ENCODE measurements at regions of chr1 and their contacts with region 1.

Region 1: GRCh38 chr1:35192853-35193664 is at the start of gene SFPQ:
- DNase-seq: peak; percentile 92 to 98
- ATAC-seq: peak; percentile 95 to 99 (median 98)
- H3K4me3 ChIP-seq: peak within 1 kb of the TSS; percentile 82 to 100 (median 98)
- H3K27ac ChIP-seq: peak within 1 kb of the TSS; percentile 96 to 100 (median 99)
- H3K4me1 ChIP-seq: peaks cover 9 to 41% (median 37%) of the 10 kb centered on the region in 9 donors
- H3K27me3 ChIP-seq: no peaks in the 10 kb centered on the region
- CTCF ChIP-seq: no peak
- total RNA-seq, gene SFPQ: 80.0 to 112 (median 95.2) TPM

Region 2: GRCh38 chr1:34859446-34860200 is 333.4 kb before region 1 on chr1 and contains the start of gene SMIM12:
- intact Hi-C with region 1: loop called in 1 of 10 experiments (anchors 10 kb)
- DNase-seq: peak; percentile 94 to 96
- ATAC-seq: peak; percentile 96 to 100 (median 98)
- H3K4me3 ChIP-seq: peak within 1 kb of the TSS; percentile 79 to 96 (median 91)
- H3K27ac ChIP-seq: peak within 1 kb of the TSS; percentile 77 to 96 (median 90)
- H3K4me1 ChIP-seq: peaks cover 8 to 37% (median 26%) of the 10 kb centered on the region in 9 donors
- H3K27me3 ChIP-seq: no peaks in the 10 kb centered on the region
- CTCF ChIP-seq: peak; percentile 80 to 95 (median 91)
- total RNA-seq, gene SMIM12: 33.9 to 74.2 (median 43.7) TPM

Region 3: GRCh38 chr1:35268282-35269200 is 75.5 kb after region 1 on chr1 and contains the start of gene ZMYM4:
- intact Hi-C with region 1: loop called in 2 of 10 experiments (anchors 10 kb)
- DNase-seq: peak; percentile 93 to 96
- ATAC-seq: peak; percentile 98 to 99 (median 98)
- H3K4me3 ChIP-seq: peak within 1 kb of the TSS; percentile 70 to 97 (median 90)
- H3K27ac ChIP-seq: peak within 1 kb of the TSS; percentile 59 to 97 (median 88)
- H3K4me1 ChIP-seq: peaks cover 0 to 45% (median 19%) of the 10 kb centered on the region in 9 donors
- H3K27me3 ChIP-seq: no peaks in the 10 kb centered on the region
- CTCF ChIP-seq: peak in 2 of 9 donors; percentile 16 to 25
- total RNA-seq, gene ZMYM4: 26.1 to 37.7 (median 35.0) TPM

Region 4: DNA sequence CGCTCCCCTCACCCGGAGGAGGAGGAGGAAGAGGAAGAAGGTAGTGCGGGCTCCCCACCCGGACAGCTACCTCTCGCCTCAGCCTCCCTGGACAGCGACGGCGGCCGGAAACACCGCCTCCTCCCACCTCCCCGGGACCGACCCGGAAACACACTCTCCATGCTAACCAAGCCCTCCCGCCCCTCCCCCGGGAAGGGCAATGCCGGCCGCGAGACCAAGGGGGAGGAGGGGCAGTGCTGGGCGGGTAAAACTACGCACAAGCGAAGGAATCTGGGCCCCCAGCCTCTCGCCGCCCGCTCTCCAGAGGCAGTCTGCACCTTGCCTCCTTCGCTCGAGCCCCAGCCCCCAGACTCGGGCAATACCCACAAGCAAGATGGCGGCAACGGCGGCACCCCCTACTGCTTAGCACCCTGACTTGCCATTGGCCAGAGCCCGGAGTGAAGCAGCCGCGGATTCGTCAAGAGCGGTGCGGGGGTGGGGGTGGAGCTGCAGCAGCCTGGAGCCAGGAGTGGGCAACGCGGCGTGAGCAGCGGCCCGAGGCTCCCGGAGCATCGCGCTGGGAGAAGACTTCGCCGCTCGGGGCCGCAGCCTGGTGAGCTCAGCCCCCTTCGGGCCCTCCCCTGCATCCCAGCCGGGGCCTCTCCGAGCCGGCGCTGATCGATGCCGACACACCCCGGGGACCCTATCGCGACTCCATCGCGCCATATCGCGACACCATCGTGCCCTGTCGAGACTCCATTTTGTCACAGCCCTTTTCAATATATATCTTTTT is 364.4 kb after region 1 on chr1 and contains the starts of genes KIAA0319L and NCDN:
- intact Hi-C with region 1: loop called in 3 of 10 experiments (anchors 5 to 10 kb)
- DNase-seq: peak; percentile 96 to 97
- ATAC-seq: peak; percentile 94 to 98 (median 97)
- H3K4me3 ChIP-seq: peak within 1 kb of the TSS; percentile 74 to 98 (median 89)
- H3K27ac ChIP-seq: peak within 1 kb of the TSS; percentile 97 to 100 (median 98)
- H3K4me1 ChIP-seq: peaks cover 0 to 84% (median 59%) of the 10 kb centered on the region in 9 donors
- H3K27me3 ChIP-seq: no peaks in the 10 kb centered on the region
- CTCF ChIP-seq: peak in 1 of 9 donors; percentile 6
- total RNA-seq, gene KIAA0319L: 57.9 to 84.3 (median 78.3) TPM
- total RNA-seq, gene NCDN: 20.3 to 51.7 (median 34.5) TPM

Measured in heart right ventricle (tissue), 16 donors.